Heart right ventricle (tissue), 16 donors: ENCODE measurements at regions of chr2 and their contacts with region 1.

Region 1: DNA sequence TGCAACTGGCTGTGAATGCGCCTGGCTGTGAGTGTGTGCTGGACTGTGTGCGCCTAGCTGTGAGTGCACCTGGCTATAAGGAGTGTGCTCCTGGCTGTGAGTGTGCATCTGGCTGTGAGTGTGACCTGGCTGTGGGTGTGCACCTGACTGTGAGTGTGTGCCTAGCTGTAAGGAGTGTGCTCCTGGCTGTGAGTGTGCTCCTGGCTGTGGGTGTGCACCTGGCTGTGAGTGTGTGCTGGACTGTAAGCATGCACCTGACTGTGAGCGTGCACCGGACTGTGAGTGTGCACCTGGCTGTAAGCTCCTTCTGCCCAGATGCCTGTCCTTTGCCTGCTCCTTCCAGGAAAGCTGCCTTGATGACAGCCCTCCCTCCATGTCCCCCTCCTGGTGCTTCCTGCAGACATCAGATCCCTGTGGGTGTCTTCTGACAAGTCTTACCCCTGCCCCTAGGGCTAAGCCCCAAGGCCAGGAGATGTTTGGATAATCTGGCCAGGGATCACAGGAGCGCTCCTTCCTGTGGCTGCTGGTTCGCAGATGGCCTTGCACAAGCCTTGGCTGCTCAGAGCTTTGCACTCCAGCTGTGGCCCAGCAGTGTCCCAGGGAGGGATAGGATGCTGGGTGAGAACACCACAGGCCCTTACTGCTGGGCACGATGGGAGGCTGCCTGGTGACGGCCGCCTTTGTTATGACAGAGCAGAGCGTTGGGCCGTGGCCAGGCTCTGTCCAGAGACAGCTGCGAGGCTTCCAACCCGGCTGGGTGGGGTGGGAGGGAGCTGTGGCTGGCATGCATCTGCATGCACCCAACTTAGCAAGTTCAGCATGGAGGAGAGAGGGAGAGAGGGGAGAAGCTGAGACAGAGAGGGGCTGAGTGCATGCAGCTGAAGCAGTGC is 89.9 kb downstream of the GLI2 start:
- DNase-seq: peak; percentile 45 to 61
- ATAC-seq: peak; percentile 9 to 77 (median 67)
- H3K4me3 ChIP-seq: no peak overlapping the region
- H3K27ac ChIP-seq: no peak overlapping the region
- H3K4me1 ChIP-seq: peaks cover 0 to 21% (median 10%) of the 10 kb centered on the region in 9 donors
- H3K27me3 ChIP-seq: peaks cover 0 to 22% (median under 1%) of the 10 kb centered on the region in 7 donors
- CTCF ChIP-seq: no peak

Region 2: GRCh38 chr2:120914839-120915521 is 89.4 kb after region 1 on chr2:
- intact Hi-C with region 1: loop called in 1 of 10 experiments (anchors 5 kb)
- DNase-seq: peak; percentile 84 to 85
- ATAC-seq: peak; percentile 79 to 91 (median 86)
- H3K4me3 ChIP-seq: no peak overlapping the region
- H3K27ac ChIP-seq: peak overlapping the region; percentile 21 to 81 (median 74)
- H3K4me1 ChIP-seq: peaks cover 19 to 52% (median 37%) of the 10 kb centered on the region in 9 donors
- H3K27me3 ChIP-seq: no peaks in the 10 kb centered on the region
- CTCF ChIP-seq: peak in 5 of 9 donors; percentile 12 to 47 (median 43)